Gastrocnemius medialis (tissue), 4 donors: ENCODE measurements at regions of chrX and their contacts with region 1.

Region 1: GRCh38 chrX:135973548-135974278 is at the start of gene MMGT1:
- DNase-seq: peak; percentile 67 to 72
- ATAC-seq: peak; percentile 92 to 93
- H3K4me3 ChIP-seq: peak within 1 kb of the TSS; percentile 70 to 84 (median 75)
- H3K27ac ChIP-seq: peak within 1 kb of the TSS; percentile 91 to 94 (median 92)
- H3K4me1 ChIP-seq: peaks cover 6 to 8% of the 10 kb centered on the region in 2 donors
- H3K27me3 ChIP-seq: no peaks in the 10 kb centered on the region
- CTCF ChIP-seq: peak in 1 of 5 experiments; percentile 3
- POLR2A ChIP-seq: peak; percentile 39 to 41
- total RNA-seq, gene MMGT1: 20.6 to 29.2 (median 23.5) TPM

Region 2: GRCh38 chrX:135521405-135522189 is 452.1 kb before region 1 on chrX:
- in situ Hi-C with region 1: no loop called
- intact Hi-C with region 1: loop called (anchors 5 kb)
- DNase-seq: peak; percentile 59 to 65
- ATAC-seq: peak; percentile 77 to 79
- H3K4me3 ChIP-seq: peak overlapping the region; percentile 51 to 61 (median 56)
- H3K27ac ChIP-seq: peak overlapping the region; percentile 65 to 79 (median 75)
- H3K4me1 ChIP-seq: no peaks in the 10 kb centered on the region
- H3K27me3 ChIP-seq: peaks cover 0 to 16% (median 7%) of the 10 kb centered on the region in 3 donors
- CTCF ChIP-seq: no peak
- POLR2A ChIP-seq: peak; percentile 18 to 50

Region 3: DNA sequence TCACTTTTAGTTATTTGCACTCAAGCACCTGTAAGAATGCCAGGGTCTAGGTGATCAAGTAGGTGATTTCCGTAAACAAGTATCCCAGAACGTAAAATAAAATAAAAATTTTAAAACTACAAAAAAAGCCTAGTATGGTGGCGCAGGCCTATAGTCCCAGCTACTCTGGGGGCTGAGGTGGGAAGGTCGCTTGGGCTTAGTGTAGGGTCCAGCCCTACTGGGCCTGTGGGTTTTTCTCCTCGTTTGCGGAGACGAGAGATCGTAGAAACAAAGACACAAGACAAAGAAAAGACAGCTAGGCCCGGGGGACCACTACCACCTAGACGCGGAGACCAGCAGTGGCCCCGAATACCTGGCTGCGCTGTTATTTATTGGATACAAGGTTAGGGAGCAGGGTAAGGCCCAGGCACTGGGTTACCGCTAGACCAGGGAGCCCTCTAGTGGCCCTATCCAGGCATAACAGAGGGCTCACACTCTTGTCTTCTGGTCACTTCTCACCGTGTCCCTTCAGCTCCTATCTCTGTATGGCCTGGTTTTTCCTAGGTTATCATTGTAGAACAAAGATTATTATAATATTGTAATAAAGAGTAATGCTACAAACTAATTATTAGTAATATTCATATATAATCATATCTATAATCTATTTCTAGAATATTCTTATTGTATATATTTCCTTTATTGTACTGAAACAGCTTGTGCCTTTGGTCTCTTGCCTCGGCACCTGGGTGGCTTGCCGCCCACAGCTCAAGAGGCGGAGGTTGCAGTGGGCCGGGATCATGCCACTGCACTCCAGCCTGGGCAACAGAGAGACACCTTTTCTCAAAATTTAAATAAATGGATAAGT is 41.8 kb before region 1 on chrX:
- in situ Hi-C with region 1: no loop called
- intact Hi-C with region 1: no loop called
- DNase-seq: no peak
- ATAC-seq: no peak
- H3K4me3 ChIP-seq: no peak overlapping the region
- H3K27ac ChIP-seq: no peak overlapping the region
- H3K4me1 ChIP-seq: no peaks in the 10 kb centered on the region
- H3K27me3 ChIP-seq: no peaks in the 10 kb centered on the region
- CTCF ChIP-seq: peak in 4 of 5 experiments; percentile 27 to 64 (median 44)
- POLR2A ChIP-seq: no peak